ENCODE measurements at regions of chr1 and their contacts with region 1.

Region 1: DNA sequence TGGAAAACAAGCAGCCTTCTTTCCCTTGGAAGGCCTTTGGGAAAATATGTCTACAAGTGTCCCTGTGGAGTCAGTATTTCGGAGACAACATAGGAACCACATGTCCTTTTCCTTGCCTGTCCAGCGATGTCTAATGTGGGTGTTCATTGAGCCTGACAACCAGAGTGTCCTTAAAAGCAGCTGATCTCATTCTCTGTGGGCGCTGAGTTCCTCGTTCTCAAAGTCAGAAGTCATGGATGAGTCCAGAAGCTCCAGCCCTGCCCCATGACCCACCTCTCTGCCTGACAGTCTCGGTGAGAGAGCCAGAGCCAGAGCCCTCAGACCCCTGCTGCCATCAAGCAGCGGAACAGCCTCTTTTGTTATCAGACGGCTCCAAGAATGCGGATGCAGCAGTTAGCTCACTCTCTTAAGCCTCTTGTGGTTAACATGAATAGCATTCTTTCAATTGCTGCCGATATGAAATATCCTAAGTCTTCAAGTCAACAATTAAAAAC is 329.2 kb downstream of the TGFB2 start:
- DNase-seq: no peak
- ATAC-seq: peak; percentile 89
- H3K4me3 ChIP-seq: peak overlapping the region in 1 of 2 experiments; percentile 26; a peak in 2 of 4 replicates
- H3K27ac ChIP-seq: peak overlapping the region; percentile 84
- H3K4me1 ChIP-seq: peaks cover 29% of the 10 kb centered on the region
- H3K27me3 ChIP-seq: no peaks in the 10 kb centered on the region
- CTCF ChIP-seq: peak; percentile 9; the same call in 1 of the 2 replicates

Region 2: DNA sequence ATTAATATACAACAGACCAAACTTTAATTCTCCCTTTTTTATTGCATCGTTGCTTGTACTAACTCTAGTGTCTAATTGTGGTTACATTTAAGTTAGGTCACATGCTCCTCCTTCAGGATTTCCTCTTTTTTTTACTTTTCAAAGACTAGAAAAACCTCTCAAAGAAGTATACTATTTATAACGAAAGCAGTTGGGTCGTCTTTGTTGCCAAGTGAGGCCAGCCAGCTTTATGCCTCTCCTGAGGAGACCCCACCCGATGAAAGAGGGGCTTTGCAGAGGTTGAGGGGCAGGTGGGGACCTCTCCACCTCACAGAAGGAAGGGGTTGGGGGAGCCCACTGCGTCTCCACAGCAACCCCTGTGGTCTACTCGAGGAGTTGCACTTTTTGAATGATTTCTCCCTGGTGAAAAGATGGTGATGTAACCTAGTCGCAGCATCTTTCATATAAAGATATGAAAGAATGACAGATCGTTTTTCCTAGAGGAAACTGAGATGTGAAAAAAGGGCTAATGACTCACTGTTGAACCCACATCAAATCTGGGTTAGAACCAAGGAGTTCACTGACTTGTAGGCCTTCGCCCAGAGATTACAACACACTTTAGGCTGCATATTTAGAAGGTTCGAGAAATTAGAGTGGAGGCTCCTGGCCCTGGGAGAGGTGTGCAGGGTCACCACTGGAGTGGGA is 322.8 kb before region 1 on chr1:
- CTCF ChIA-PET with region 1: no interaction called
- POLR2A ChIA-PET with region 1: no interaction called
- in situ Hi-C with region 1: no loop called
- intact Hi-C with region 1: loop called (anchors 10 kb)
- DNase-seq: no peak
- ATAC-seq: peak; percentile 44
- H3K4me3 ChIP-seq: peak overlapping the region; percentile 97 to 98
- H3K27ac ChIP-seq: peak overlapping the region; percentile 100
- H3K4me1 ChIP-seq: peaks cover 66% of the 10 kb centered on the region
- H3K27me3 ChIP-seq: no peaks in the 10 kb centered on the region
- CTCF ChIP-seq: peak; percentile 84

Region 3: DNA sequence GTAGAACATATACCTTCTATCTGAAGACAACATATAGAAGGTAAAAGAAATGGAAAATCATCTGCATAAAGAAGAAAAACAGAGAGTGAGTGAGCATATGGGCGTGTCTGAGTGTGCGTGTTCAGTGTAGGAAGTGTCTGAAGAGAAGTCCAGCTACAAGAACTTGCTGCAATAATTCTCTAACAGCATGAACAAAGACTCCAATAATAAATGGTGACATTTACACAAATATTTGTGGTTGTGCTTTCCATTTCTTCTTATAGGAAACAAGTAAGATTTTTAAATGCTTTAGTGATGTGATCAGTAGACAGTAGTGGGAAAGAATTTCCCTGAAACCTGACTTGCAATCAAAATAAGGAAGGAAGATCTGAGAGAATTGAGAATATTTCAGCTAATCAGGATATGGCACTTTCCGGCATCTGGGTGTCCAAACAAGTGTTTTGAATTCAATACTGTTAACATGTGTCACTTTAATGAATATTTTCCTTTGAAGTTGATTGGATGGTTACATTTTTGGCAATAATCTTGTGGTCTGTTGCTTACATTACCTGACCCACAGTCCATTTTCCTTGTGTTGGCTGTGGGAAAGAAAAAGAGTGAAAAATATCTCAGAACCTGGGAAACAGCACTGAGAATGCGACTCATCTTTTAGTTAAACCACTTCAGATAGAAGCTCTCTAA is 175.2 kb before region 1 on chr1:
- CTCF ChIA-PET with region 1: no interaction called
- POLR2A ChIA-PET with region 1: no interaction called
- in situ Hi-C with region 1: no loop called
- intact Hi-C with region 1: no loop called
- DNase-seq: no peak
- ATAC-seq: peak; percentile 62
- H3K4me3 ChIP-seq: peak overlapping the region; percentile 24 to 65
- H3K27ac ChIP-seq: peak overlapping the region; percentile 86
- H3K4me1 ChIP-seq: peaks cover 21% of the 10 kb centered on the region; the same call in 1 of the 2 replicates
- H3K27me3 ChIP-seq: no peaks in the 10 kb centered on the region
- CTCF ChIP-seq: no peak

Region 4: DNA sequence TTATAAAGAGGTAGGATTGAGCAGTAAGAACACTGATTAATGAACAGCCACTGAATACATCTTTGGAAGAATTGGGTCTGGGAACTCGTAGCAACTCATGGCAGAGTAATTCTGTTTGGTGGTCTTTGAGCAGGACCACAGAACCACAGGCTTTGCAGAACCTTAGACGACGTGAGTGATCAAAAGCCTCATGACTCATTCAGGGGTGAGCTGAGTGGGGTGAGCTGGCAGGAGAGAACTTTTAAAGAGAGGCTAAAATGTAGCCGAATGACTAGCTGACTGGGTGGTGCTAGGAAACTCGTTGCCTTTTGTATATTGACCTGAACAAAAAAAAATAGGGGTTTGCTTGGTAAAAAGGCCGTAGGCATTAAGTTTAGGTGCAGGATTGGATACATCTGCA is 15.4 kb before region 1 on chr1:
- CTCF ChIA-PET with region 1: no interaction called
- POLR2A ChIA-PET with region 1: no interaction called
- in situ Hi-C with region 1: no loop called
- intact Hi-C with region 1: no loop called
- DNase-seq: no peak
- ATAC-seq: no peak
- H3K4me3 ChIP-seq: no peak overlapping the region
- H3K27ac ChIP-seq: peak overlapping the region; percentile 81; the same call in 1 of the 2 replicates
- H3K4me1 ChIP-seq: peaks cover 14% of the 10 kb centered on the region
- H3K27me3 ChIP-seq: no peaks in the 10 kb centered on the region
- CTCF ChIP-seq: no peak

Measured in Panc1 (cell line).